Left ventricle myocardium inferior (tissue), 1 donor: ENCODE measurements at regions of chr17 and their contacts with region 1.

Region 1: GRCh38 chr17:34420254-34420766 is 57.3 kb upstream of the CCL1 start:
- DNase-seq: peak; percentile 43
- H3K4me3 ChIP-seq: no peak overlapping the region
- H3K27ac ChIP-seq: no peak overlapping the region
- H3K4me1 ChIP-seq: no peaks in the 10 kb centered on the region
- H3K27me3 ChIP-seq: peaks cover 89% of the 10 kb centered on the region
- CTCF ChIP-seq: peak; percentile 96

Region 2: GRCh38 chr17:33725675-33726271 is 694.5 kb before region 1 on chr17:
- intact Hi-C with region 1: no loop called
- DNase-seq: peak; percentile 16
- H3K4me3 ChIP-seq: no peak overlapping the region
- H3K27ac ChIP-seq: no peak overlapping the region
- H3K4me1 ChIP-seq: no peaks in the 10 kb centered on the region
- H3K27me3 ChIP-seq: peaks cover 76% of the 10 kb centered on the region
- CTCF ChIP-seq: peak; percentile 68

Region 3: GRCh38 chr17:34370997-34371395 is 49.3 kb before region 1 on chr17:
- intact Hi-C with region 1: no loop called
- DNase-seq: no peak
- H3K4me3 ChIP-seq: no peak overlapping the region
- H3K27ac ChIP-seq: no peak overlapping the region
- H3K4me1 ChIP-seq: no peaks in the 10 kb centered on the region
- H3K27me3 ChIP-seq: peaks cover 30% of the 10 kb centered on the region
- CTCF ChIP-seq: no peak

Region 4: DNA sequence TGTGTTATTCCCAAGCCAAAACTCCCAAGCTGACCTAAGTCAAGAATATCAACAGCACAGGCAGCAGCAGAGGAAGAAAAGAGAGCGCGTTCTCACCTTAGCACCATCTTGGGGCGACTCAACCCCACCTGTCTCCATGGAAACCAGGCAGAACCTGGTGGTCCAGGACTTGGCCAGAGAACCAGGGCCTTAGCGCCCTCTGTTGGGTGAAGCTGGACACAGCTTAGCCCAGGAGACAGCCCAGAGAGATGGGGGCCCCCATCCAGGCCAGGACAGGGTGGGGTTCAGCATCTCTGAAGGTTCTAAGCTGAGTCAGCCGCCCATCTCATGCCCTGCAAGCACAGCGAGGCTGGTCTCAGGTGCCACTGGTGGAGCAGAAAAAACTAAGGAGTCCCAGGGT is 99.0 kb after region 1 on chr17:
- intact Hi-C with region 1: loop called (anchors 10 kb)
- DNase-seq: no peak
- H3K4me3 ChIP-seq: no peak overlapping the region
- H3K27ac ChIP-seq: no peak overlapping the region
- H3K4me1 ChIP-seq: no peaks in the 10 kb centered on the region
- H3K27me3 ChIP-seq: peaks cover 95% of the 10 kb centered on the region
- CTCF ChIP-seq: peak; percentile 59

Region 5: GRCh38 chr17:35119368-35120165 is 699.3 kb after region 1 on chr17 and contains the start of gene RAD51D:
- intact Hi-C with region 1: loop called (anchors 10 kb)
- DNase-seq: peak; percentile 77
- H3K4me3 ChIP-seq: peak within 1 kb of the TSS; percentile 85
- H3K27ac ChIP-seq: peak within 1 kb of the TSS; percentile 77
- H3K4me1 ChIP-seq: peaks cover 23% of the 10 kb centered on the region
- H3K27me3 ChIP-seq: no peaks in the 10 kb centered on the region
- CTCF ChIP-seq: peak; percentile 94
- total RNA-seq, gene RAD51D: 4.6 TPM